Heart left ventricle (tissue), 16 donors: ENCODE measurements at regions of chr15 and their contacts with region 1.

Region 1: GRCh38 chr15:42239528-42240182 is 31.6 kb upstream of the VPS39 start:
- DNase-seq: no peak
- ATAC-seq: no peak
- H3K4me3 ChIP-seq: no peak overlapping the region
- H3K27ac ChIP-seq: no peak overlapping the region
- H3K4me1 ChIP-seq: no peaks in the 10 kb centered on the region
- H3K27me3 ChIP-seq: no peaks in the 10 kb centered on the region
- CTCF ChIP-seq: no peak
- POLR2A ChIP-seq: no peak

Region 2: DNA sequence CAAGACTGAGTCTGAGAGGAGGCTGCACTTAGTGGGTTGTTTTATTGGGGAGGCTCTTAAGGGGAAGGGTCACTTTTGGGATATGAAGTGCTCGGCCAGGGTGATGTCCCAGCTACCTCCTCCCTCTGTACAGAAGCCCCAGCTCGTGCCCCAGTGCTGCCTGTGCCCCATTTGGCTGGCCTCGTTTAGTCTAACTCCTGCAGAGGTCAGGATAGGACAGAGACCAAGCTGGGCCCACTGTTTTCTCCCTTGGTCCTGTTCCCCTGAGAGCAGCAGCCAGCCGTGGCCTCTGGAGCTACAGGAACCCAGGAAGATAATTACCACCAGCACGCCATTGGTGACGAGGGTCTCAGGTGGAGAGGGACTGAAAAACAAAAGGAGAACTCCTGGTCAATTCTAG is 237.3 kb before region 1 on chr15:
- intact Hi-C with region 1: no loop called
- DNase-seq: peak in 1 of 5 donors; percentile 43
- ATAC-seq: peak; percentile 64 to 81 (median 74)
- H3K4me3 ChIP-seq: no peak overlapping the region
- H3K27ac ChIP-seq: no peak overlapping the region
- H3K4me1 ChIP-seq: no peaks in the 10 kb centered on the region
- H3K27me3 ChIP-seq: peaks cover 0 to 3% (median 0%) of the 10 kb centered on the region in 9 donors
- CTCF ChIP-seq: peak in 1 of 12 donors; percentile 14
- POLR2A ChIP-seq: no peak

Region 3: DNA sequence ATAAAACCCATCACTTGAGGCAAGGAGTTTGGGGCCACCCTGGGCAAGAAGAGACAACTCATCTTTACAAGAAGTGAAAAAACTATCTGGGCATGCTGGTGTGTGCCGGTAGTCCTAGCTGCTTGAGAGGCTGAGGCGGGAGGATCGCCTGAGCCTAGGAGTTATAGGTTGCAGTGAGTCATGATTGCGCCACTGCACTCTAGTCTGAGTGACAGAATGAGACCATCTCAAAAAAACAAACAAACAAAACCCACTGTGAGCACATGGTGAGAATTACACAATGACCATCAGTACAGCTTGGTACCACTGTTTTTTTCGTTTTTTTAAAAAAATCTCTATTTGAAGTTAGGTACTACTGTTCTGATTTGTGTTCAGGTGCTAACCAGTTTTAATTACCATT is 45.2 kb before region 1 on chr15:
- intact Hi-C with region 1: no loop called
- DNase-seq: no peak
- ATAC-seq: no peak
- H3K4me3 ChIP-seq: no peak overlapping the region
- H3K27ac ChIP-seq: no peak overlapping the region
- H3K4me1 ChIP-seq: peaks cover 0 to 5% (median 0%) of the 10 kb centered on the region in 12 donors
- H3K27me3 ChIP-seq: no peaks in the 10 kb centered on the region
- CTCF ChIP-seq: no peak
- POLR2A ChIP-seq: no peak

Region 4: DNA sequence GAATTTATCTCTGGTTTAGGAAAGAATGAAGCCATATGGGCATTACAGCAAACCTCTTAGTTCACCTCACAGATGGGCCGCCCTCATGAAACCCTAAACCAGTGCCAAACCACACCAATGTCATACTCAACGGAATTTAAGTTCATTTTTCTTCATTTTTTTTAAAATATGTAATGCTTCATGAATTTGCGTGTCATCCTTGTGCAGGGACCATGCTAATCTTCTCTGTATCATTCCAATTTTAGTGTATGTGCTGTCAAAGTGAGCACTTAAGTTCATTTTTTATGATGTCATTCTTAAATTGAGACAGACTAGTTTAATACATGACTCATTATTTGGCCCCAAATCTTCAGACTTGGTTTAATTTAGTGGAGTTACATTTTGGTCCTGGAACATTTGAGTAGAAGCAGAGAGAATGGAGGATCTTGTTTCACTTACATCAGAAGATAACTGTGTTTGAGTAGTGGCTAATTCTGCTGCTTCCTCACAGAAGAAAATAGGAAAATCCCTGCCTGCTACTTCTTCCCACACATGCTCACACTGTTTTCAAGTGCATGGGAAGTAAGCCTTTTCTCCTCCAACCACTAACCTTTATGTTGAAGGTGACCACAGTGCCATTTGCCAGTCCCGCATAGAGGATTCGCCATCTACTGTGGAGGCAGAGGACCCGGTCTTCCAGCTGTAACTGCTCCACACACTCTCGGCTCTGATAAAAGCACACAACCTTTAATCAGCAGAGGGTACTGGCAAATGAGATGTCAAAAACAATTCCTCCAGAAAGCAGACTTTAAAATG is 188.0 kb after region 1 on chr15:
- intact Hi-C with region 1: loop called in 1 of 10 experiments (anchors 10 kb)
- DNase-seq: no peak
- ATAC-seq: peak; percentile 35 to 82 (median 52)
- H3K4me3 ChIP-seq: no peak overlapping the region
- H3K27ac ChIP-seq: peak overlapping the region in 7 of 12 donors; percentile 22 to 62 (median 54)
- H3K4me1 ChIP-seq: peaks cover 0 to 11% (median 0%) of the 10 kb centered on the region in 12 donors
- H3K27me3 ChIP-seq: no peaks in the 10 kb centered on the region
- CTCF ChIP-seq: no peak
- POLR2A ChIP-seq: no peak